ENCODE measurements at regions of chr3 and their contacts with region 1.

Region 1: DNA sequence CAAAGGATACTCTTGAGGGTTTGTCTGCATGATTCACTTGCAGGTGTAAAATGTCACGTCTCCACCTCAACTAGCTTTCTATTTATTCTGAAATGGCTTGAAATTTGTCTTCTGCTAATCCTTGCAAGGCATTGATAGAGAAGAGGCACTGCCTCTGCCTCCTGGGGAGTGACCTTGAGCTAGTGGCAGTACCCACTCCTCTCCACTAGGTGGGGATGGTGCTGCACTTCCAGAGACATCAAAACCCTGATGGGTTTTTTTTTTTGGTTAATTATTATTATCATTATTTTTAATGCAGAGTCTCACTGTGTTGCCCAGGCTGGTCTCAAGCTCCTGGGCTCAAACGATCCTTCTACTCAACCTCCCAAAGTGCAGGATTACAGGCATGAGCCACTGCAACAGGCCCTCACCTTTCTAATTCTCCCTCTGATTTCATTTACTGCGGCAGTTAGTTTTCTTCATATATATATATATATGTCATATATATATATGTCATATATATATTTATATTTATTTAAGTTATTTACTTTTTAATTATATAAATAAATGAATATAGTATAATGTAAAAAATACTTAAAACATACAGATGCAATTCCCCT is 117.6 kb upstream of the EIF1B start:
- DNase-seq: peak in 2 of 3 donors; percentile 46 to 75
- ATAC-seq: peak; percentile 83
- H3K4me3 ChIP-seq: no peak overlapping the region
- H3K4me1 ChIP-seq: no peaks in the 10 kb centered on the region
- CTCF ChIP-seq: peak; percentile 94

Region 2: DNA sequence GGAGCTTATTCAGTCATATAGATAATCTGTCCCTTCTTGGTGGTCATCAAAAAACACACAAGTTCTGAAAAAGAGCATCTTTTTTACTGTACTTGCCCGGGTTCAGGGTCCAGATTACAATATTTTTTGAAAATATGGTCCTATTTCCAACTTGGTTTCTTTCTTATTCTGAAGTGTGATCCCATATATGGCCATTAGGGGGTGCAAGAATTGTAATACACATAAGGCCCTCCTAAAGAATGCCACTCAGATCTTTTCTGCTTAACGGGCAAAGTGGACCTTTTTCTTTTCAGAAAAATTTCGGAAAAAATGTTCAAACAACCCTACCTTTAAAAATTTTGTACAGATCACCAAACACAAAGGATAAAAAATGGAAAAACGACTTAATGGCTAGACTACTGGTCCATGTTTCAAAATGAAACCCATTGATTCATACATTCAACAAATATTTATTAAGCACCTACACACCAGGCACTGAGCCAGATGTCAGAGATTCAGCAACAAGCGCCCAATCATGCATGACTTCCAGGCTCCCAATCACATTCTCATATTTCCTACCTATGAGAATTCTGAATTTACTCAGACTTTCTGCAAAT is 484.5 kb before region 1 on chr3:
- intact Hi-C with region 1: loop called in 1 of 2 experiments (anchors 10 kb)
- DNase-seq: peak in 1 of 3 donors; percentile 42
- ATAC-seq: peak; percentile 52
- H3K4me3 ChIP-seq: no peak overlapping the region
- H3K4me1 ChIP-seq: no peaks in the 10 kb centered on the region
- CTCF ChIP-seq: no peak

Region 3: DNA sequence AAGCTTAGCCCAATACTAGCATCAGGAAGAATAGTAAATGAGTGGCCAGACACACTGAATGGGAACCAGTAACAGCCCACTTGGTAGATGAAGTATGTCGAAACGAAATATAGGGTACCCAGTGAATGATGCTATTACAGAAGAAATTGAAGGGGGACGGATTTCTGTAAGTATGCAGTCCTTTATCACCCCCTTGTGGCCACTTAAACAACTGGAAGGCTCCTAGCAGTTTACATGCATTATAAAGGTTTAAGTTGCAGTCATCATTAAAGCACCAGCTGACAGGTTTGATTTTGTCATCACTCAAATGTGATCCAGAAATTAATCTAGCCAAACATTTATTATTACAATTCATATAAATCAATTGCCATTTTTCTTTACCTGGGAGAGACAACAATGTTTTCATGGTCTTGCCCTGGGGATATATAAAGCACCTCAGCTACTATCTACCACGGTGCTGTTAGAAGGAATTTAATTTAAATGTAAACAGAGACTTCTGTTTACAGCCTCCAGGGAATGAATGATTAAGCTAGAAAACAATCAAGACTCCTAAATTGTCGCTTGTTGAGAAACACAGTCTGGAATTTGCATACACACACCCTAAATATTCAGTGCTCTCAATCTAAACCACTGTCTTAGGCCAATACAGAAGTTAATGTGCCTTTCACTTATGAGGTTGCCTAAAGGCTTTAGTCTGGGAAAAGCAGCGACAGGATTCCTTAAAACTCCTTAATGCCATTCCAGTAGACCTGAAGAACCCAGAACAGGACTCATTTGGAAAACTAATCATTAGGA is 125.3 kb after region 1 on chr3:
- intact Hi-C with region 1: loop called (anchors 5 kb)
- DNase-seq: peak in 1 of 3 donors; percentile 75
- ATAC-seq: peak; percentile 63
- H3K4me3 ChIP-seq: no peak overlapping the region
- H3K4me1 ChIP-seq: peaks cover 7% of the 10 kb centered on the region
- CTCF ChIP-seq: peak; percentile 50

Region 4: DNA sequence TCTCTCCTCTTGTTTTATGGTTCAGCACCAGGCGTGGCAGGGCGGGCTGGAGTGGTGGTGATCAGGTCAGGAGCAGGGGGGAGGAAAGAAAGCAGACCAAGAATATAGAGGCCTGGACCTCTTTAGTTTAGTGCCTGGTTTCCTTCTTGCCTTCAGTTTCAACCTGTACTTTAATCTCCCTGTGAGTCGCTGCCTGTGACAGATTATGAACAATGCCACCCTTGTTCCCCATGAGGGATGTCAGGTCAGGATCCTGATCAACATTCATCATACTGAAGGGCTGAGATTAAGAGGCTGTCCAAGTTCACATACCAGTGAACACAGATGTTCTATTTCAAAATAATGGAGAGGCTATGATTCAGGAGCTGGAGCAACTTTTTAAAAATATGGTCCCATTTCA is 206.4 kb after region 1 on chr3:
- intact Hi-C with region 1: no loop called
- DNase-seq: no peak
- ATAC-seq: no peak
- H3K4me3 ChIP-seq: no peak overlapping the region
- H3K4me1 ChIP-seq: no peaks in the 10 kb centered on the region
- CTCF ChIP-seq: no peak

Measured in mucosa of descending colon (tissue), 3 donors.